Right ventricle myocardium superior (tissue), 1 donor: ENCODE measurements at regions of chr2 and their contacts with region 1.

Region 1: GRCh38 chr2:70919672-70920366 is 15.9 kb upstream of the ATP6V1B1 start:
- DNase-seq: peak; percentile 86
- ATAC-seq: peak; percentile 95

Region 2: DNA sequence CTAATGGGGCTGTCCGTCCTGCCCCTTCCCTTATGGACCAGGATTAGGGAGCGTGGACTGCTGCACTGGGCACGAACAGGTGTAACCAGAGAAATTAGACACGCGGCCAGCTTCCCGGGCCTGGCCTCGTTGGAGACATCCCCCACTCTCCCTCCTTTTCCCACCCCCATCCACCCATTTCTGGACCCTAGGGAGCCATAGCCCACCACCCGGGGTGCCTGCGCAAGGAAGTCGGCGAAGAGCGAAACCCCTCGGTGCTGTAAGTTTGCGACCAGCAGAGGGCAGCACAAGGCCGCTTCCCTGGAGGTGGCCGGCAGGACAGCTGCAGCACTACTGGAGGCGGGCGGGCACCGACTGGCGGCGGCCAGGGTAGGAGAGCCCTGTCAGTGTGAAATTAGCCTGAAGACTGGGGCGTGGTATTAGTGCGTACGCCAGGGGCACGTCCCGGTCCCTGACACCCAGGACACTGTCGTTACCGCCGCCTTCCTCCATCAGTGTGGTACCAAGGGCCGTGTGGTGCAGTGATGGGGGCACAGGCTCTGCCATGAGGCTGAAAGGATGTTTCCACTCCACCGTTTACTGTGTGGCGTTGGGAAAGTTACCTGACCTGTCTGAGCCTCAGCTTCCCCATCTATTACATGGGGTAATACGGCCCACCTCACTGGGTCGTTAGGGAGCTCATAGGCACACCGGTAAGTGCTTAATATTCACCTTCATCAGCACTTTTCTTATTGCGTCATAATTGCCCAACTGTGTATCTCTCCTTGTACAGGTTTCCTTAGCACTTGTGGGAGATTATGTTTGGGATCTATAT is 48.2 kb before region 1 on chr2:
- intact Hi-C with region 1: loop called (anchors 5 kb)
- DNase-seq: peak; percentile 90
- ATAC-seq: peak; percentile 99